Endothelial cell of umbilical vein (primary cell): ENCODE measurements at regions of chr12 and their contacts with region 1.

Region 1: DNA sequence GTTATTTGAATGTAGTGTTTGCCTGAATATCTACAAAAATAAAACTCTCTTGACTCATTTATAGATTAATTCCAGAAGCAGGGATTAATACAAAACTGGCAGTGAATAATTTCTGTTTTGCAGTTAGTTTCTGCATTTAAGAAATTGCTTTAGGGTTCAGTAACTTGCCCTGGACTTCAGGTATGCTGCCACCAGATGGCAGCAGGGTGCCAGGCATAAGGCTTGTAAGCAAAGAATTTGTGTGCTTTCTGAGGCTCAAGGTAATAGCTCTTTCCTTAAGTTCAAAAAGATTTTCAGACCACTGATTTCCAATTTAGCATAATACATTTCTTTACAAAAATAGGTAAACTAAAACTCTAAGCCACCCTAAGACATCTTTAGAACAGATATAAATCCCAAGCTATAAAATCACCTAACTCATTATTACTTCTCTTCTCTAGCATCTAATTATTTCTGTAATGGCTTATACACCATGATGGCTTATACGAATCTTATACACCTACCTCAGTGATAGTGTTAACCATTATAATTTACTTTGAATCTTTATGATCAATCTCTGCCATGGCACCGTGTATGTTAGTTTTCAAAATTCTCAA is 398.3 kb downstream of the APAF1 start:
- DNase-seq: peak; percentile 63
- H3K4me3 ChIP-seq: no peak overlapping the region
- H3K27ac ChIP-seq: no peak overlapping the region
- H3K4me1 ChIP-seq: no peaks in the 10 kb centered on the region
- H3K27me3 ChIP-seq: no peaks in the 10 kb centered on the region
- CTCF ChIP-seq: peak; percentile 64 to 79
- POLR2A ChIP-seq: no peak

Region 2: DNA sequence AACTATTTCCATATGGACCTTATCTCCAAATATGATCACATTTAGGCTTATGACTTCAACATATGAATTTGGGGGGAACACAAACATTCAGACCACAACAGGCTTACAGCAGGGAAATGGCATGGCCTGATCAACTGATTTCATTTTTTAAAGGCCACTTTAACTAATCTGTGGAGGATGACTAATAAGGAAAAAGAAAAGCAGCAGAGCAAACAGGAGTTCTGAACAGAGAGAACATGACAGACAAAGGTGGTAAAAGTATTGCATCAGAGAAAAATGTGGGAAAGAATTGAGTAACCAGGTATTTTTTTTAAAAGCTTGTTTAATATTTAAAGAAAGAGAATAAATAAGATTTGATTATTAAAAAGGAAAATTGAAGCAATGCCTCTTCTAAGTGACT is 894.1 kb before region 1 on chr12:
- CTCF ChIA-PET with region 1: no interaction called
- POLR2A ChIA-PET with region 1: no interaction called
- dilution Hi-C with region 1: no loop called
- intact Hi-C with region 1: no loop called
- DNase-seq: no peak
- H3K4me3 ChIP-seq: no peak overlapping the region
- H3K27ac ChIP-seq: no peak overlapping the region
- H3K4me1 ChIP-seq: no peaks in the 10 kb centered on the region
- H3K27me3 ChIP-seq: peaks cover 0 to 7% of the 10 kb centered on the region in 2 experiments
- CTCF ChIP-seq: no peak
- POLR2A ChIP-seq: no peak

Region 3: GRCh38 chr12:99079811-99080210 is 36.4 kb after region 1 on chr12:
- CTCF ChIA-PET with region 1: no interaction called
- POLR2A ChIA-PET with region 1: no interaction called
- dilution Hi-C with region 1: no loop called
- intact Hi-C with region 1: no loop called
- DNase-seq: no peak
- H3K4me3 ChIP-seq: no peak overlapping the region
- H3K27ac ChIP-seq: no peak overlapping the region
- H3K4me1 ChIP-seq: no peaks in the 10 kb centered on the region
- H3K27me3 ChIP-seq: no peaks in the 10 kb centered on the region
- CTCF ChIP-seq: no peak
- POLR2A ChIP-seq: no peak

Region 4: GRCh38 chr12:99767809-99768208 is 724.4 kb after region 1 on chr12:
- CTCF ChIA-PET with region 1: interaction called, 23 read pairs
- POLR2A ChIA-PET with region 1: no interaction called
- dilution Hi-C with region 1: no loop called
- intact Hi-C with region 1: no loop called
- DNase-seq: peak; percentile 1
- H3K4me3 ChIP-seq: no peak overlapping the region
- H3K27ac ChIP-seq: no peak overlapping the region
- H3K4me1 ChIP-seq: no peaks in the 10 kb centered on the region
- H3K27me3 ChIP-seq: no peaks in the 10 kb centered on the region
- CTCF ChIP-seq: peak in 1 of 2 donors; percentile 13
- POLR2A ChIP-seq: no peak

Region 5: DNA sequence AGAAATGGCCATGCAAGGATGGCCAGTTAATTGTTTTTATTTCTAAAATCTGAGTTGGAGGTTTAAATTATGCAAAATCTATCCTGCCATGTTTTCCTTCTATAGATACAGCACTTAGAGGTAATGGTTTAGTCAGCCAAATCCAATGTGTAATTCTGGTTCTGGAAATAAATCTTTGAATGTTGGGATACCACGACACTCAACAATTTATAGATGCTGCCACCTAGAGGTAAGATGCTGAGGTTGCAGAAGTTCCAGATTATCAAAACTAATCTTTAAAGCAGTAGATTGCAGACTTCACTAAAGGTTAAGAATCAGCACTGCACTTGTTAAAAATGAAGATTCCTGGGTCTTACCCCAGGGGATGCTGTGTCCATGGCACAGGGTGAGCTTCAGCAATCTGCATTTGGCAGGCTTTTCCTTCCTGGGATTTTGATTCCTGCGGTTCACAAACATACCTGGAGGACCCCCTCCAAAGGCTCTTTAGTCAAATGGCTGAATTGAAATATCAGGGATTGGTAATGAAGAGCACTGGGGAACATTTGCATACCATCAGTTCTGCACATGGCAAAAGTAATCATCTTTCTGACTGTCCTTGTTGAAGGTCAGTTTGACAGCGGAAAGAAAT is 1697.8 kb after region 1 on chr12:
- CTCF ChIA-PET with region 1: interaction called, 4 read pairs
- POLR2A ChIA-PET with region 1: no interaction called
- dilution Hi-C with region 1: no loop called
- intact Hi-C with region 1: loop called (anchors 2 kb)
- DNase-seq: peak; percentile 44
- H3K4me3 ChIP-seq: no peak overlapping the region
- H3K27ac ChIP-seq: no peak overlapping the region
- H3K4me1 ChIP-seq: no peaks in the 10 kb centered on the region
- H3K27me3 ChIP-seq: no peaks in the 10 kb centered on the region
- CTCF ChIP-seq: peak; percentile 52 to 60
- POLR2A ChIP-seq: no peak